CD8-positive, alpha-beta T cell (primary cell): ENCODE measurements at regions of chr5 and their contacts with region 1.

Region 1: DNA sequence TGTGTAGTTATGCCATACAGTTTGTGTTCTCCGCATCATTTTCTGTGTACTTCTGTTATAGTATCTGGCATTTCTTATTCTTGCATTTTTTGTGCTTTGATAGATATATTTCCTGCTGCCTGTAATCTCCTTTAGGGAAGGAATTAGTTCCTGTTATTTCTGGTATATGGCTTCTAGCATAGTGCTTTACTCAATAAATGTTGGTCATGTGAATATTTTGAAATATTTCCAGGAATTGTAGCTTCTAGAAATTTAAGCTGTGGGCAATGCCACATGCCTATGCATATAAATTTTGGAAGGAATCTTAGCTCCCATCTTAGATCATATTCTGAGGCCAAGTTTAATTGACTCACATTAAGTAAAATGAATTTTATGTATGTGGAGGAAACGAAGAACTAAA is 11.5 kb upstream of the PRRC1 start:
- DNase-seq: no peak
- ATAC-seq: no peak
- H3K4me3 ChIP-seq: no peak overlapping the region
- H3K4me3 Mint-ChIP-seq: no peak overlapping the region
- H3K27ac ChIP-seq: no peak overlapping the region
- H3K27ac Mint-ChIP-seq: no peak overlapping the region
- H3K4me1 ChIP-seq: no peaks in the 10 kb centered on the region
- H3K4me1 Mint-ChIP-seq: no peaks in the 10 kb centered on the region
- H3K27me3 ChIP-seq: no peaks in the 10 kb centered on the region
- H3K27me3 Mint-ChIP-seq: peaks cover 3% of the 10 kb centered on the region
- CTCF ChIP-seq: no peak

Region 2: DNA sequence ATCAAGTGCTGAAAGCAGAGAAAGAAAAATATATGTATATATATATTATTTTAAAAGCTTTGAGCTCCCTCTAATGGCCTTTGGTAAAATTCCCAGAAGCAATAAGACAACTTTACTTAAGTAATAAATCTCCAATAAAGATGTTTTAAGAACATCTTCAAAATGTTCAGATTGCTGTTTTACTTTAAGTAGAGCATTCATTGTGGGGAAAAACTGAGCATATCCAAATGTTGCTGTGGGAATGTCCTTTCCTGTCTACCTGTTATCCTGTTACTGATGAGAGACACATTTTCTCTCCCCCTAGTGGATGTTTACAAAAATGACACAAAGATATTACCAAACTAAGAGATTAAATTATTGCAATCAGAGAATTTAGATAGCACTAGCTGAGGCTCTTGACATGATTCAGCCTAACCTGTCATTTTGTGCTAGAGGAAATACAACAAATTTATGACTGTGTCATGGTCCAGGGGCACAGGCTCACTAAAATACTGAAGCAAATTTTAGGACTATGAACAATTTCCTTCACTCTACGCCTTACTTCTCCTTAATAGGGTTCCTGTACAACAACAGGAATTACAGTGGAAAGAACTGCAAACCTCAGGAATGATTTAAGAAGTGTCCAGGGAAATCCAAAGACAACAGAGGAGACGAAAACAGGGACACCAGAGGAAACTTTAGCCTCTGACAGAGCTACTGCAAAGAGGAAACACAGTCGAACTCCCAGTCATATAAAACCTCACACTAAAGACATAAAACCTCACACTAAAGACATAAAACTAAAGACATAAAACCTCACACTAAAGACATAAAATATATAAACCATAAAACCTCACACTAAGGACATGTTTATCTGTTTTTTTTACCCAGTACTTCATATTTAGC is 12.8 kb before region 1 on chr5:
- CTCF ChIA-PET with region 1: interaction called, 10 read pairs
- POLR2A ChIA-PET with region 1: interaction called, 4 read pairs
- intact Hi-C with region 1: no loop called
- DNase-seq: peak in 2 of 9 experiments; percentile 40 to 54
- ATAC-seq: peak; percentile 71
- H3K4me3 ChIP-seq: no peak overlapping the region
- H3K4me3 Mint-ChIP-seq: no peak overlapping the region
- H3K27ac ChIP-seq: no peak overlapping the region
- H3K27ac Mint-ChIP-seq: no peak overlapping the region
- H3K4me1 ChIP-seq: no peaks in the 10 kb centered on the region
- H3K4me1 Mint-ChIP-seq: no peaks in the 10 kb centered on the region
- H3K27me3 ChIP-seq: no peaks in the 10 kb centered on the region
- H3K27me3 Mint-ChIP-seq: peaks cover 27% of the 10 kb centered on the region
- CTCF ChIP-seq: peak; percentile 94